ENCODE measurements at regions of chr7 and their contacts with region 1.

Region 1: DNA sequence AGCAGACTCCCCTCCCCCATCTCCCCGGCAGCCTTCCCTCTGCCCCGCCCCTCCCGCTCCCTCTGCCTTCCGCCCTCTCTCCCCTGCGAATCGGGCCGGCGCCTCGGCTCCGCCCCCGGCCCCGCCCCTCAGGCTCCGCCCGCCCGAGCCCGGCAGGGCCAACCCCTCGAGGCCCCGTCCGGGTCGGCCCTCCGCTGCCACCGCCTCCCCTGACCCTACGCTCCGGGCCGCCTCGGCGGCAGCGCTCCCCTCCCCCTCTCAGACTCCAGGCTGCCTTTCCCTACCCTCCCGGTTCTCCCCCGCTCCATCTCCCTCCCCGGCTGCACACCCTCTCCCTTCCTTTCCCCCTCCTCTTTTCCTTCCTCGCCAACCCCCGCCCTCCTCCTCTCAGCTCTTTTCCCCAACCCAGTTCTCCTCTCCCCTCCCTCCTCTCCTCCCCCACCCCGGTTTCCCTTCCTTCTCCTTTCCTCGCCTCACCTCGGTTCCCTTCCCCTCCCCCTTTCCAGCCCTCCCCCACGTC is 1.6 kb downstream of the ZNF467 start:
- DNase-seq: peak; percentile 90 to 93
- ATAC-seq: peak; percentile 88 to 95 (median 92)
- H3K4me3 ChIP-seq: peak overlapping the region in 9 of 10 donors; percentile 48 to 74 (median 64)
- H3K27ac ChIP-seq: peak overlapping the region in 9 of 10 donors; percentile 34 to 89 (median 72)
- H3K4me1 ChIP-seq: peaks cover 7 to 43% (median 37%) of the 10 kb centered on the region in 9 donors
- H3K27me3 ChIP-seq: peaks cover 0 to 12% (median 2%) of the 10 kb centered on the region in 7 donors
- CTCF ChIP-seq: no peak

Region 2: DNA sequence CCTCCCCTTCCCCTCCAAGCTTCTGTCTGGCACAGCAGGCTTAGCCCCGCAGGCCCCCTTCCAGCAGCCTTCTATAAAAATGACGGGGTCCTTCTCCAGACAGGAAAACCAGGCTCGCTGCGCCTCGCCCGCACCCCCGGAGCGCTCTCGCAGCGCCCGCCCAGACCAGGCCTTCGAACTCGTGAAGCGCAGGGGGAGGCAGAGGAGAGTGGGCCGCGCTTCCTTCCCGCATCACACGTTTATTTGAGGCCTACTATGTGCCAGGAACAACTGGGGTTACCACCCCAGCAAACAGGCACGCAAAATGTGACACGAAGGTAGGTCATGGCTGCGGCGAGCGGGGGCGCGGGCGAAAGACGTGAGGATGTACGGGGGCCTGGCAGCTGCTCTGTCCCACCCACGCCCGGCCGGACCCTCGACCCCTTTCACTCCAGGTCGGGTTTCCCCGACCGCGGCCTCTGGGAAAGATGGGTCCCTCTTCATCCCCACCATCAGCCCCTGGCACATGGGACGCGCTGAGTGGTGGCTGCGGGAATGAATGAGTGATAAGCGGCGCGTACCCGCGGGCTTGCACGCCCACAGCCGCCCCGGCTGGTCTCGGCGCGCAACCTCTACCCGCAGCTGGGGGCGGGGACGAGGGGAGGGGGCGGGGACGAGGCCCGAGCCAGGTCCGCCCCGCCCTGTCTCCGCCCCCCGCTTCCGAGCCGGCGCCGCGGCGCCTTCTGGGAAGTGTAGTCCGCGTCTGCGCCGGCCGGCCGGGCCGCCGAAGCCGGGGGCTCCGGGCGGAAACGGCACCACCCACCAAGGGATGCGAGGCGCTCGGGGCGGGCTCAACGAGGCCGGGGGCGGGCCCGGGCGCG is 57.5 kb before region 1 on chr7:
- intact Hi-C with region 1: loop called in 1 of 10 experiments (anchors 5 kb)
- DNase-seq: peak; percentile 91 to 95
- ATAC-seq: peak; percentile 89 to 97 (median 92)
- H3K4me3 ChIP-seq: peak overlapping the region; percentile 63 to 82 (median 76)
- H3K27ac ChIP-seq: peak overlapping the region; percentile 67 to 91 (median 86)
- H3K4me1 ChIP-seq: peaks cover 10 to 49% (median 28%) of the 10 kb centered on the region in 9 donors
- H3K27me3 ChIP-seq: no peaks in the 10 kb centered on the region
- CTCF ChIP-seq: no peak

Region 3: GRCh38 chr7:149725426-149725891 is 46.3 kb before region 1 on chr7:
- intact Hi-C with region 1: no loop called
- DNase-seq: no peak
- ATAC-seq: no peak
- H3K4me3 ChIP-seq: peak overlapping the region in 1 of 10 donors; percentile 22
- H3K27ac ChIP-seq: peak overlapping the region in 1 of 10 donors; percentile 15
- H3K4me1 ChIP-seq: peaks cover 3 to 22% (median 5%) of the 10 kb centered on the region in 9 donors
- H3K27me3 ChIP-seq: no peaks in the 10 kb centered on the region
- CTCF ChIP-seq: no peak